H1 (cell line): ENCODE measurements at regions of chr16 and their contacts with region 1.

Region 1: GRCh38 chr16:12392585-12393091 is 411.0 kb downstream of the CPPED1 start:
- DNase-seq: no peak
- H3K4me3 ChIP-seq: no peak overlapping the region
- H3K27ac ChIP-seq: no peak overlapping the region
- H3K4me1 ChIP-seq: no peaks in the 10 kb centered on the region
- H3K27me3 ChIP-seq: no peaks in the 10 kb centered on the region
- CTCF ChIP-seq: peak in 1 of 3 experiments; percentile 13; a peak in 1 of 4 replicates
- EP300 ChIP-seq: no peak
- POLR2A ChIP-seq: no peak
- RAD21 ChIP-seq: no peak

Region 2: DNA sequence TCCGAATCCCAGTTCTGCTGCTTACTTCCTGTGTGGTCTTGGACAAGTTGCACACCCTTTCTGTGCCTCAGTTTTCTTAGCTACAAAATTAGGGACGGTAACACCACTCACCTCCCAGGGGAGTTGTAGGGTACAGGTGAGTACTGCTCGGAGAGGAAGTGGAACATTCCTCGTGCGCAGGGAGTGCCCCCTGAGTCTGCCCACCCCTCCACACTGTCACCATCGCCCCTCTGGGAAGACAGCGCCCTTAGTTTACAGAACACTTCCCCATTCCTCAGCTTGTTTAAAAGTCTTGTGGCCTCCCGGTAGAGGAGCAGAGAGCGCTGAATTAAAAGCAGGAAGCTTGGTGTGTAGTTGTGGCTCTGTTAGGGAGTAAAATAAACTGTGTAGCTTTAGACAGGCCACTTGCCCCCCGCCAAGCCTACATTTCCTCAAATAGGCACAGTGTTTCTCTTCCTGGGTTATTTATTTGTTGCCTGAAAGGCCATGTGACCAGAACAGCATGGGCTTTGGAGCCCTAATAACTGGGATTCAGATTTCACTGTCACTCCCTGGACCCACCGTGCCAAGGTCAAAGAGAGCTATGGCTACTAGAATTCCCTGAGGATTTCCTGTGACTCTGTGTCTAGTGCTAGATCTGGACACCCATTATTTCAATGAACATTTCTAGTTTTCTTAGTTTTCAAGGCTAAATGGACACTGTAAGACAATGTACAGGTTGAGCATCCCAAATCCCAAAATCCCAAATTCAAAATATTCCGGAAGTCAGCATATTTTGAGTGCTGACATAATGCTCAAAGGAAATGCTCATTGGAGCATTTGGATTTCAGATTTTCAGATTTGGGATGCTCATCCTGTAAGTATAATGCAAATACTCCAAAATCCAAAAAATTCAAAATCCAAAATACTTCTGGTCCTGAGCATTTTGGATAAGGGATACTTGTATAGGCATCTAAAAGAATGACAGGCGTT is 43.6 kb before region 1 on chr16:
- CTCF ChIA-PET with region 1: no interaction called
- POLR2A ChIA-PET with region 1: no interaction called
- DNase-seq: no peak
- H3K4me3 ChIP-seq: no peak overlapping the region
- H3K27ac ChIP-seq: no peak overlapping the region
- H3K4me1 ChIP-seq: no peaks in the 10 kb centered on the region; a peak in 1 of 7 replicates
- H3K27me3 ChIP-seq: no peaks in the 10 kb centered on the region
- CTCF ChIP-seq: no peak
- EP300 ChIP-seq: no peak
- POLR2A ChIP-seq: no peak
- RAD21 ChIP-seq: no peak

Region 3: DNA sequence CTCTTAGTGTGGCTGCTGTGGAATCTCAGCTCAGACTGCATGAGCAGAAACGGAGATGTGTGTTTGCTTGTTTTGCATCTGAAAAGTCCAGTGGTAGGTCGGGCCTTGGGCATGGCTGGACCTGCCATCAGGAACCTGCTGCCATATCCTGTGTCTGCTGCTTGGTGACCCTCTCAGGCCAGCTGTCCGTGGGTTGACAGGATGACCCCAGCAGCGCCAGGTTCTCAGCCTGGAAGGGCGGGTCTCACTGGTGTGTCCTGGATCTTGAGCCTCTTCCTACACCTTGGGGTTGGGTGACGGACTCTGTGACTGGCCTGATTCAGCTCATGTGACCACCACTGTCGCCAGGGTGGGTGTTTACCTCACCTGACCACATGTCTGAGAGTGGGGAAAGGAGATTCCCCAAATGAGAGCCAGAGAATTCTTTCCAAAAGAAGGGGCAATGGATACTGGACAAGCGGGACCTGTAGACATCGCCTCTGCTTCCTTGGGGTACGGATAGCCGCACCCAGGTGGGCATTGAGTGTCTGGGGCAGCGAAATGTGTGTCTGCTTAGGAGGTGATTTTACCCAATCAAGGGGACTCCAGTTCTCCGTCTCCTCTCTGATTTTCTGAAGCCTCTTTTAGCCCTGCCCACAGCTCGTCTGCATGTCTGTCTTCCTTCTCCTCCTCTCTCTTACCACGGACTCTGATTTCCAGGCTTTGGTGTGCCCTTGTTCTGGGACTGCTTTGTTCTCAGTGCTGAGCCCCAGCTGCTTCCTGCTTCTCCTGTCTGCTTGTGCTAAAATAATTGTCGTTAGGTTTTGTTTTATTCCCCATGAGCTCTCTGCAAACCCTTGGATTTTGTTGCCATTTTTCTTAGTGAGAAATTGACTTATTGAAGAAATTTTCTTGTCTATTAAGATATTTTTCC is 11.4 kb after region 1 on chr16:
- CTCF ChIA-PET with region 1: interaction called, 23 read pairs
- POLR2A ChIA-PET with region 1: no interaction called
- DNase-seq: no peak
- H3K4me3 ChIP-seq: no peak overlapping the region
- H3K27ac ChIP-seq: no peak overlapping the region
- H3K4me1 ChIP-seq: no peaks in the 10 kb centered on the region; a peak in 1 of 7 replicates
- H3K27me3 ChIP-seq: no peaks in the 10 kb centered on the region
- CTCF ChIP-seq: no peak
- EP300 ChIP-seq: no peak
- POLR2A ChIP-seq: no peak
- RAD21 ChIP-seq: no peak